OCI-LY7 (cell line): ENCODE measurements at regions of chr14 and their contacts with region 1.

Region 1: GRCh38 chr14:67240978-67241414 is 239 bp upstream of the PALS1 start:
- DNase-seq: peak; percentile 97
- H3K4me3 ChIP-seq: peak overlapping the region; percentile 79
- H3K27ac ChIP-seq: peak overlapping the region; percentile 57
- H3K4me1 ChIP-seq: peaks cover 15% of the 10 kb centered on the region
- CTCF ChIP-seq: no peak

Region 2: GRCh38 chr14:67251573-67252226 is 10.7 kb after region 1 on chr14:
- CTCF ChIA-PET with region 1: no interaction called
- POLR2A ChIA-PET with region 1: interaction called, 10 read pairs
- intact Hi-C with region 1: no loop called
- DNase-seq: no peak
- H3K4me3 ChIP-seq: no peak overlapping the region
- H3K27ac ChIP-seq: no peak overlapping the region
- H3K4me1 ChIP-seq: no peaks in the 10 kb centered on the region
- CTCF ChIP-seq: no peak

Region 3: GRCh38 chr14:67343601-67344230 is 102.7 kb after region 1 on chr14:
- CTCF ChIA-PET with region 1: no interaction called
- POLR2A ChIA-PET with region 1: no interaction called
- intact Hi-C with region 1: no loop called
- DNase-seq: no peak
- H3K4me3 ChIP-seq: no peak overlapping the region
- H3K27ac ChIP-seq: no peak overlapping the region
- H3K4me1 ChIP-seq: no peaks in the 10 kb centered on the region
- CTCF ChIP-seq: no peak

Region 4: GRCh38 chr14:67359775-67360648 is 119.0 kb after region 1 on chr14 and contains the starts of genes ATP6V1D and EIF2S1:
- CTCF ChIA-PET with region 1: no interaction called
- POLR2A ChIA-PET with region 1: no interaction called
- intact Hi-C with region 1: loop called (anchors 2 kb)
- DNase-seq: peak; percentile 99
- H3K4me3 ChIP-seq: peak within 1 kb of the TSS; percentile 93
- H3K27ac ChIP-seq: peak within 1 kb of the TSS; percentile 76
- H3K4me1 ChIP-seq: peaks cover 39% of the 10 kb centered on the region
- CTCF ChIP-seq: peak; percentile 100
- total RNA-seq, gene ATP6V1D: 31.4 and 39.0 TPM in 2 replicates
- total RNA-seq, gene EIF2S1: 170 and 222 TPM in 2 replicates

Region 5: DNA sequence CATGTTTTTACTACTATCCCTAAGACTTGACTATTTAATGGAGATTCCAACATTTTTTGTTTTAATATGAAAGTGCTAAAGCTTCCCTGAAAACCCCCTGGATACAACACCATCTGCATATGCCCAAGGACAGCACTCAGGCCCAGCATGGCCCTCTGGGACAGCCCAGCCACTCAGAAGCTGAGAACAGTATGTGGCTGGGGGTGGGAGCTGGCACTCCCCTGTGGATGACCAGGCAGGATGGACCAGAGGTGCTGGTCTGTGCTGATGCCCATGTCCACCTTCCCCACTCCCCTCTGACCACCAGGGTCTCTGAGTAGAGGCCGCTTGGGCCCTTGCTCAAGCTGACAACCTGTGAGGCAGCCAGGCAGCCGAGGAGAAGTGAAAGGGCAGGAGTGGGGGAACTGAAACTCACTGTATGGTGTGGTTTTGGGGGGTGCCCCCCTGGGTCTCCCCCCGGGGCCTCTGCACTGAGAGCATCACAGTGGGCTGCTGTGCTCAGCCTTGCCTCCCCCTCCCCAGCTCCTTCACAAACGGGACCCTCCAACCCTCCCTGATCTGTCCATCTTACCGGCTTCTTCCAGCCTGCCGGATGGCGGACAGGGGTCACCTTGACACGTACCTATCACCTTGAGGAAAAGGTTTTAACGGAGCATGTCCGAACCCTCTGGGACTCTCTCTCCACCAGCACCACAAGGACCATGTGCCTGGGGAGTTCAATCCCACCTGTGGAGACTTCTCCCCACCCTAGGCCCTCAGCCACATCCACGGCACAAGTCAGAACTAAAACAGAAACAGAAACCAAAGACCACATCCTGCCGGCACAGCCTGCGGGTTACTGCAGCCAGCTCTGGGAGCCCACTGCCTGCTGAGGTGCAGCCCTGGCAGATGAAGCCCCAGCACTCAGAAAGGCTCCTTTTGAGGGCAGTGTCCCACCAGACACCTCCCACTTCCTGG is 247.2 kb after region 1 on chr14 and contains the start of gene TMEM229B:
- CTCF ChIA-PET with region 1: no interaction called
- POLR2A ChIA-PET with region 1: no interaction called
- intact Hi-C with region 1: loop called (anchors 1 kb)
- DNase-seq: peak; percentile 95
- H3K4me3 ChIP-seq: peak within 1 kb of the TSS; percentile 57
- H3K27ac ChIP-seq: peak within 1 kb of the TSS; percentile 89
- H3K4me1 ChIP-seq: peaks cover 69% of the 10 kb centered on the region
- CTCF ChIP-seq: no peak
- total RNA-seq, gene TMEM229B: 3.9 and 4.8 TPM in 2 replicates

Region 6: GRCh38 chr14:67541448-67542387 is 300.7 kb after region 1 on chr14:
- CTCF ChIA-PET with region 1: no interaction called
- POLR2A ChIA-PET with region 1: no interaction called
- intact Hi-C with region 1: no loop called
- DNase-seq: no peak
- H3K4me3 ChIP-seq: no peak overlapping the region
- H3K27ac ChIP-seq: no peak overlapping the region
- H3K4me1 ChIP-seq: no peaks in the 10 kb centered on the region
- CTCF ChIP-seq: no peak